HEK293 (cell line): ENCODE measurements at regions of chr3 and their contacts with region 1.

Region 1: DNA sequence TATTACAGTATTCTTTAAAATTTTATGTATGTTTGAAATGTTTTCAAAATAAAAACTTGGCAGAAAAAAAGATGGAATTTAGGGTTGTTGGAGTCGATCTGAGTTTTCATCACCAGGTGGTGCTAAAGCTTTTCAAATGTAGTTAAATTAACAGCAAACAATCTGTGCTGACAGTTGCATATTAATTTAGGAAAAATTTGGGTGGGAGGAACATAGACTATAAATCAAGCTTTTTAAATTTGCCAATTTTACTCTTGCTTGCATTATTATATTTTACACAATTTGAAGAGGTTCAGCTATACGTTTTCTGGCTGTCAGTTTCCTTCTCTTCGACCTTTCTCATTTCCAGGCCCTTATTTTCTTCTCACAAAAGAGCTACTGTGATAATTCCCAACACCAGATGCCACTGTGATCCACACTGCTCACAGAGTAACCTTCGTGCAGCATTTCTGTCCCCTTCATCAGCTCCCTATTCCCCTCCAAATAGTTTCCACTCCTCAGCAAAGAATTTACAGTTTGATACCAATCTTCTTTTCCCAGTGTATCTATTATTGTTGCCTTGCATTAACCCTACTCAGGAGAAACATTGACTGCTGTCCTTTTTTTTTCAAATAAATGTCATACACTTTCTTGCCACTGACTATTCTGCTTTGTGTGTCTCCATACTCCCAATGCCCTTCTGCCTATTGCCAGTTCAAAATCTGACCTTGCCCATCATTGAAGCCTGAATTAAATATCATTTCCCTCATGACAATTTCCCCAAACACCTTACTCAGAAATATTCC is 53.4 kb upstream of the EIF5A2 start:
- H3K4me3 ChIP-seq: no peak overlapping the region
- H3K27ac ChIP-seq: no peak overlapping the region
- H3K4me1 ChIP-seq: no peaks in the 10 kb centered on the region; the same call in 1 of the 2 replicates
- CTCF ChIP-seq: peak; percentile 39; the same call in 1 of the 2 replicates

Region 2: DNA sequence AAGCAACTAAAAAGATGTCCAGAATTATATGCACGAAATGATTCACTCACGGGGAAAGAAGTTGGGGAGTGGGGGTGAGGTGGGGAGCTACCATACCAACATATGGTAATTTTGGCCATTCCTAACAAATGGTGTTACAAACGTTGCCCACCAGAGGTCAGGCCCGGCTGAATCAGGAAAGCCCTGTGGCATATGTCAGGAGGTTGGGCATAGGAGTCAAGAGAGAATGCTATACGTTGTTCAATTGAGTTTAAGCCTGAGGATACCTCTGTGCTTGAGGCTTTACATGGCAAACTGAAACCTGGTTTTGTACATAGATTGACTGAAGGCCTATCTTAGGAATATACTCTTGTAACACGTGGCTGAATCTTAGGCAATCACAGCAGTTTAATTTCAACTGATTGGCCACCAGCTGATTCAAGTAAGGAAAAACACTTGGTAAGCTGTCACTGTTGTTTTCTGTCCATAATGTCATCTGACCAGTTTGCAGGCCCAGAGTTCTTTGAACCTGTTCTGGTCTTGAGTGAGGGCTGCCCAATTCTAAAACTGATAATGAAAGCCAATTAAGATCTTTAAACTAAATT is 88.1 kb after region 1 on chr3:
- CTCF ChIA-PET with region 1: interaction called, 15 read pairs
- POLR2A ChIA-PET with region 1: no interaction called
- H3K4me3 ChIP-seq: no peak overlapping the region
- H3K27ac ChIP-seq: no peak overlapping the region
- H3K4me1 ChIP-seq: no peaks in the 10 kb centered on the region
- CTCF ChIP-seq: peak; percentile 46

Region 3: GRCh38 chr3:171183042-171183441 is 221.2 kb after region 1 on chr3:
- CTCF ChIA-PET with region 1: interaction called, 10 read pairs
- POLR2A ChIA-PET with region 1: no interaction called
- H3K4me3 ChIP-seq: no peak overlapping the region
- H3K27ac ChIP-seq: no peak overlapping the region
- H3K4me1 ChIP-seq: no peaks in the 10 kb centered on the region; the same call in 1 of the 2 replicates
- CTCF ChIP-seq: no peak

Region 4: GRCh38 chr3:171566803-171567422 is 605.1 kb after region 1 on chr3:
- CTCF ChIA-PET with region 1: interaction called, 18 read pairs
- POLR2A ChIA-PET with region 1: no interaction called
- H3K4me3 ChIP-seq: no peak overlapping the region
- H3K27ac ChIP-seq: no peak overlapping the region
- H3K4me1 ChIP-seq: peaks cover 4% of the 10 kb centered on the region
- CTCF ChIP-seq: no peak

Region 5: GRCh38 chr3:171772427-171773056 is 810.7 kb after region 1 on chr3:
- CTCF ChIA-PET with region 1: interaction called, 17 read pairs
- POLR2A ChIA-PET with region 1: no interaction called
- H3K4me3 ChIP-seq: no peak overlapping the region
- H3K27ac ChIP-seq: no peak overlapping the region
- H3K4me1 ChIP-seq: peaks cover 2% of the 10 kb centered on the region; the same call in 1 of the 2 replicates
- CTCF ChIP-seq: no peak